PC-3 (cell line): ENCODE measurements at regions of chr17 and their contacts with region 1.

Region 1: GRCh38 chr17:20203761-20204263 is 194.7 kb downstream of the SPECC1 start:
- DNase-seq: no peak
- ATAC-seq: no peak
- H3K4me3 ChIP-seq: no peak overlapping the region
- H3K27ac ChIP-seq: no peak overlapping the region
- H3K4me1 ChIP-seq: peaks cover 45% of the 10 kb centered on the region
- H3K27me3 ChIP-seq: no peaks in the 10 kb centered on the region
- CTCF ChIP-seq: no peak

Region 2: GRCh38 chr17:19327039-19327776 is 876.6 kb before region 1 on chr17:
- CTCF ChIA-PET with region 1: no interaction called
- POLR2A ChIA-PET with region 1: no interaction called
- intact Hi-C with region 1: no loop called
- DNase-seq: peak; percentile 87
- ATAC-seq: peak; percentile 84
- H3K4me3 ChIP-seq: no peak overlapping the region
- H3K27ac ChIP-seq: peak overlapping the region; percentile 27
- H3K4me1 ChIP-seq: peaks cover 20% of the 10 kb centered on the region
- H3K27me3 ChIP-seq: no peaks in the 10 kb centered on the region
- CTCF ChIP-seq: no peak; the same call in 1 of the 2 replicates

Region 3: GRCh38 chr17:20155258-20156195 is 48.3 kb before region 1 on chr17:
- CTCF ChIA-PET with region 1: no interaction called
- POLR2A ChIA-PET with region 1: no interaction called
- intact Hi-C with region 1: loop called (anchors 5 kb)
- DNase-seq: peak; percentile 99
- ATAC-seq: peak; percentile 94
- H3K4me3 ChIP-seq: peak overlapping the region; percentile 74
- H3K27ac ChIP-seq: peak overlapping the region; percentile 20
- H3K4me1 ChIP-seq: peaks cover 20% of the 10 kb centered on the region
- H3K27me3 ChIP-seq: no peaks in the 10 kb centered on the region
- CTCF ChIP-seq: no peak

Region 4: GRCh38 chr17:20191056-20191455 is 12.8 kb before region 1 on chr17:
- CTCF ChIA-PET with region 1: no interaction called
- POLR2A ChIA-PET with region 1: no interaction called
- intact Hi-C with region 1: loop called (anchors 1 kb)
- DNase-seq: peak; percentile 96
- ATAC-seq: peak; percentile 73
- H3K4me3 ChIP-seq: no peak overlapping the region
- H3K27ac ChIP-seq: peak overlapping the region; percentile 6; the same call in 1 of the 2 replicates
- H3K4me1 ChIP-seq: peaks cover 34% of the 10 kb centered on the region
- H3K27me3 ChIP-seq: no peaks in the 10 kb centered on the region
- CTCF ChIP-seq: no peak